Caco-2 (cell line): ENCODE measurements at regions of chr13 and their contacts with region 1.

Region 1: GRCh38 chr13:28753243-28753887 is 34.6 kb upstream of the SLC46A3 start:
- DNase-seq: peak; percentile 71 to 84
- H3K4me3 ChIP-seq: no peak overlapping the region
- H3K4me3 Mint-ChIP-seq: peak overlapping the region; percentile 31
- H3K27ac Mint-ChIP-seq: peak overlapping the region; percentile 91
- H3K4me1 ChIP-seq: peaks cover 20% of the 10 kb centered on the region
- H3K4me1 Mint-ChIP-seq: peaks cover 23% of the 10 kb centered on the region
- H3K27me3 ChIP-seq: no peaks in the 10 kb centered on the region
- H3K27me3 Mint-ChIP-seq: no peaks in the 10 kb centered on the region
- CTCF ChIP-seq: no peak

Region 2: GRCh38 chr13:28012896-28013295 is 740.5 kb before region 1 on chr13:
- CTCF ChIA-PET with region 1: no interaction called
- POLR2A ChIA-PET with region 1: no interaction called
- intact Hi-C with region 1: no loop called
- DNase-seq: no peak
- H3K4me3 ChIP-seq: no peak overlapping the region
- H3K4me3 Mint-ChIP-seq: no peak overlapping the region
- H3K27ac Mint-ChIP-seq: no peak overlapping the region
- H3K4me1 ChIP-seq: no peaks in the 10 kb centered on the region
- H3K4me1 Mint-ChIP-seq: no peaks in the 10 kb centered on the region
- H3K27me3 ChIP-seq: no peaks in the 10 kb centered on the region
- H3K27me3 Mint-ChIP-seq: peaks cover 2% of the 10 kb centered on the region
- CTCF ChIP-seq: no peak

Region 3: GRCh38 chr13:28725046-28725445 is 28.3 kb before region 1 on chr13:
- CTCF ChIA-PET with region 1: no interaction called
- POLR2A ChIA-PET with region 1: no interaction called
- intact Hi-C with region 1: loop called (anchors 1 kb)
- DNase-seq: peak in 1 of 2 experiments; percentile 24
- H3K4me3 ChIP-seq: no peak overlapping the region
- H3K4me3 Mint-ChIP-seq: no peak overlapping the region
- H3K27ac Mint-ChIP-seq: peak overlapping the region; percentile 23
- H3K4me1 ChIP-seq: peaks cover 20% of the 10 kb centered on the region
- H3K4me1 Mint-ChIP-seq: peaks cover 21% of the 10 kb centered on the region
- H3K27me3 ChIP-seq: no peaks in the 10 kb centered on the region
- H3K27me3 Mint-ChIP-seq: no peaks in the 10 kb centered on the region
- CTCF ChIP-seq: no peak

Region 4: GRCh38 chr13:28741084-28741491 is 12.3 kb before region 1 on chr13:
- CTCF ChIA-PET with region 1: no interaction called
- POLR2A ChIA-PET with region 1: no interaction called
- intact Hi-C with region 1: no loop called
- DNase-seq: no peak
- H3K4me3 ChIP-seq: no peak overlapping the region
- H3K4me3 Mint-ChIP-seq: no peak overlapping the region
- H3K27ac Mint-ChIP-seq: no peak overlapping the region
- H3K4me1 ChIP-seq: no peaks in the 10 kb centered on the region
- H3K4me1 Mint-ChIP-seq: no peaks in the 10 kb centered on the region
- H3K27me3 ChIP-seq: no peaks in the 10 kb centered on the region
- H3K27me3 Mint-ChIP-seq: peaks cover 3% of the 10 kb centered on the region
- CTCF ChIP-seq: no peak